Aorta (tissue), 5 donors: ENCODE measurements at regions of chr12 and their contacts with region 1.

Region 1: DNA sequence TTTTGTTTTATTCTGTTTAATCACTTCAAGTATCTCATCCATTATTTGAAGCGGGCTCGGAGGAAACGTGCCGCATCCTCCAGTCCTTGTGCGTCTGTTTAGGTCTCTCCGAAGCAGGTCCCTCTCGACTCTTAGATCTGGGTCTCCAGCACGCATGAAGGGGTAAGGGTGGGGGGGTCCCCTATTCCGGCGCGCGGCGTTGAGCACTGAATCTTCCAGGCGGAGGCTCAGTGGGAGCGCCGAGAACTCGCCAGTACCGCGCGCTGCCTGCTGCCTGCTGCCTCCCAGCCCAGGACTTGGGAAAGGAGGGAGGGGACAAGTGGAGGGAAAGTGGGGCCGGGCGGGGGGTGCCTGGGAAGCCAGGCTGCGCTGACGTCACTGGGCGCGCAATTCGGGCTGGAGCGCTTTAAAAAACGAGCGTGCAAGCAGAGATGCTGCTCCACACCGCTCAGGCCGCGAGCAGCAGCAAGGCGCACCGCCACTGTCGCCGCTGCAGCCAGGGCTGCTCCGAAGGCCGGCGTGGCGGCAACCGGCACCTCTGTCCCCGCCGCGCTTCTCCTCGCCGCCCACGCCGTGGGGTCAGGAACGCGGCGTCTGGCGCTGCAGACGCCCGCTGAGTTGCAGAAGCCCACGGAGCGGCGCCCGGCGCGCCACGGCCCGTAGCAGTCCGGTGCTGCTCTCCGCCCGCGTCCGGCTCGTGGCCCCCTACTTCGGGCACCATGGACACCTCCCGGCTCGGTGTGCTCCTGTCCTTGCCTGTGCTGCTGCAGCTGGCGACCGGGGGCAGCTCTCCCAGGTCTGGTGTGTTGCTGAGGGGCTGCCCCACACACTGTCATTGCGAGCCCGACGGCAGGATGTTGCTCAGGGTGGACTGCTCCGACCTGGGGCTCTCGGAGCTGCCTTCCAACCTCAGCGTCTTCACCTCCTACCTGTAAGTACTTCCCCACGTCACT is at the start of gene LGR5:
- DNase-seq: peak; percentile 52 to 84
- ATAC-seq: peak; percentile 65
- H3K4me3 ChIP-seq: peak within 1 kb of the TSS; percentile 39 to 44
- H3K27ac ChIP-seq: no peak within 1 kb of the TSS
- H3K4me1 ChIP-seq: peaks cover 0 to 3% of the 10 kb centered on the region in 2 donors
- H3K27me3 ChIP-seq: no peaks in the 10 kb centered on the region
- total RNA-seq, gene LGR5: 0.65 to 1.6 TPM

Region 2: GRCh38 chr12:71476513-71476912 is 36.9 kb after region 1 on chr12:
- intact Hi-C with region 1: loop called in 1 of 2 experiments (anchors 5 kb)
- DNase-seq: peak in 1 of 2 donors; percentile 52
- ATAC-seq: peak; percentile 70
- H3K4me3 ChIP-seq: no peak overlapping the region
- H3K27ac ChIP-seq: peak overlapping the region; percentile 39 to 85
- H3K4me1 ChIP-seq: peaks cover 0 to 2% of the 10 kb centered on the region in 2 donors
- H3K27me3 ChIP-seq: no peaks in the 10 kb centered on the region

Region 3: DNA sequence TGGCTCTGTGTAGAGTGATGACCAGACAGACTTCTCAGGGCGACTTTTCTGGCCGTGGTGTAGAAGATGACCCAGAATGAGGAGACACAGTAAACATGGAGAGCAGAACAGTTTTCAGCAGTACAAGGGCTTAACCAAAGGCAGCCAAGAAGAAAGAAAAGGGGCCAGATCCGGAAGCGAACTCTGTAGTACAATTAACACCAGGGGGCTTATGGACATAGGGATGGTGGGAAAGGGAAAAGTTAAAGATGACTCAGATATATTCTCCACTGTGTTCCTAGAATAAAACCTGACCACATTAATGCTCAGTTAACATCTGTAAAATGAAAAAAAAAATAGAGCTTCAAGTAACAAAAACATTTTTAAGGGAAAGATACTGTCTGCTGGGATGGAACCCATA is 60.2 kb after region 1 on chr12:
- intact Hi-C with region 1: loop called in 1 of 2 experiments (anchors 10 kb)
- DNase-seq: no peak
- ATAC-seq: no peak
- H3K4me3 ChIP-seq: no peak overlapping the region
- H3K27ac ChIP-seq: no peak overlapping the region
- H3K4me1 ChIP-seq: no peaks in the 10 kb centered on the region
- H3K27me3 ChIP-seq: no peaks in the 10 kb centered on the region